ENCODE measurements at regions of chr10 and their contacts with region 1.

Region 1: DNA sequence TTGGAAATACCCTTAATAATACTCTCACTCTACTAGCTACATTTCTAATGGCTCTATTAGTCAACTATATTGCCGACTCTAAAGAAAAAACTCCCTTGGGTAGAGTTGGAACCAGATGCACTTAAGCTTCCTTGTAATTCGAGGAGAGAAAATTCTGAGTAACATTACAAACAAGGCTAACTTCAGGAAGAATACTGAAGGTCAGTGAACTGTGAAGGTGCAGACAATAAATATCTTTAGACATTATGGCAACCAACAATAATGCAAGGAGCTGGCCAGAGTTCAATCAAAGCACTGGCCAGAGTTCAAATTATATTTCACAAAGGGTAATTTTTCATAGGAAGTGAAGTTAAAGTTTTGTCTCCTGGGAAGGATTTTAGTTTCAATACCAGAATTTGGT is 40.7 kb upstream of the MRLN start:
- DNase-seq: no peak
- H3K4me3 ChIP-seq: no peak overlapping the region
- H3K27ac ChIP-seq: peak overlapping the region in 1 of 2 donors; percentile 9
- H3K4me1 ChIP-seq: no peaks in the 10 kb centered on the region
- H3K27me3 ChIP-seq: no peaks in the 10 kb centered on the region
- CTCF ChIP-seq: no peak
- POLR2A ChIP-seq: no peak

Region 2: DNA sequence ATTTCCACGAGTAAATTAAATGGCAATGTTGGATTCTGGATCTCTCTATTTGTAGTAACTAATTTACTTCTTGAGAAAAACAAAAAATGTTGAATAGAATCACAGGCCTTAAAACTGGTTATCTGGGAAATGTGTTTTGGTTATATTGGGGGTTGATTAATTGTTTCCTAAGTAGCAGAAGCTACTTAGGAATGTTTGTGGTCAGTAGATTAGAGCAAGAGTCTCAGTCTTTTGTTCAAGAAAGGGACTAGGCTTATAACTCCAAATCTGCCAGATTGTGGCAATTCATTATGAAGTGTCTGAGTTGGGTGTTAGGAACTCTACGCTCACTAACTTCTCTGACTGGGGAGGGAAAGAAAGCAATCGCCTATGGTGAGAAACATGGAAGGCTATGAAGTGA is 861.8 kb before region 1 on chr10:
- intact Hi-C with region 1: no loop called
- DNase-seq: no peak
- H3K4me3 ChIP-seq: no peak overlapping the region
- H3K27ac ChIP-seq: no peak overlapping the region
- H3K4me1 ChIP-seq: no peaks in the 10 kb centered on the region
- H3K27me3 ChIP-seq: no peaks in the 10 kb centered on the region
- CTCF ChIP-seq: no peak
- POLR2A ChIP-seq: no peak

Region 3: GRCh38 chr10:59622611-59623494 is 171.1 kb before region 1 on chr10:
- intact Hi-C with region 1: loop called (anchors 2 kb)
- DNase-seq: no peak
- H3K4me3 ChIP-seq: no peak overlapping the region
- H3K27ac ChIP-seq: no peak overlapping the region
- H3K4me1 ChIP-seq: no peaks in the 10 kb centered on the region
- H3K27me3 ChIP-seq: no peaks in the 10 kb centered on the region
- CTCF ChIP-seq: no peak
- POLR2A ChIP-seq: no peak

Region 4: DNA sequence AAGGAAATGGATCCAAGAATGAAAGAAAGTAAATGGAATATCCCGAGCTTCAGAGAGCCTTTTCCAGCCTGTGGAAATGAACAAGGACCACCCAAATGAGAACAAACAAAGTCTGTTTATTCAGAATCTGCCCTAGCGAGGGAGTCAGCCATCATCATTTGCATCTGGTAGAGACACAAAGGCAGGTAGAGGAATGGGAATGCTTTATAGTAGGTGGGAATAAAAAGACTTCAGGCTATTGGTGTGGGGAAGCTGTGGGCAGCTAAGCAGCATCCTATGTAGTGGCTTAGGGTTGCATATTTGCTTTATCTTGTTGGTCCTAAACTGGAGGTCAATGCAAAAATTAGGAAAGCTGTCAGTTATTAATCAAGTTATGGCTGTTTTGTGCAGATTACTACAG is 31.4 kb before region 1 on chr10:
- intact Hi-C with region 1: no loop called
- DNase-seq: no peak
- H3K4me3 ChIP-seq: no peak overlapping the region
- H3K27ac ChIP-seq: no peak overlapping the region
- H3K4me1 ChIP-seq: no peaks in the 10 kb centered on the region
- H3K27me3 ChIP-seq: no peaks in the 10 kb centered on the region
- CTCF ChIP-seq: no peak
- POLR2A ChIP-seq: no peak